Heart left ventricle (tissue), 16 donors: ENCODE measurements at regions of chr1 and their contacts with region 1.

Region 1: DNA sequence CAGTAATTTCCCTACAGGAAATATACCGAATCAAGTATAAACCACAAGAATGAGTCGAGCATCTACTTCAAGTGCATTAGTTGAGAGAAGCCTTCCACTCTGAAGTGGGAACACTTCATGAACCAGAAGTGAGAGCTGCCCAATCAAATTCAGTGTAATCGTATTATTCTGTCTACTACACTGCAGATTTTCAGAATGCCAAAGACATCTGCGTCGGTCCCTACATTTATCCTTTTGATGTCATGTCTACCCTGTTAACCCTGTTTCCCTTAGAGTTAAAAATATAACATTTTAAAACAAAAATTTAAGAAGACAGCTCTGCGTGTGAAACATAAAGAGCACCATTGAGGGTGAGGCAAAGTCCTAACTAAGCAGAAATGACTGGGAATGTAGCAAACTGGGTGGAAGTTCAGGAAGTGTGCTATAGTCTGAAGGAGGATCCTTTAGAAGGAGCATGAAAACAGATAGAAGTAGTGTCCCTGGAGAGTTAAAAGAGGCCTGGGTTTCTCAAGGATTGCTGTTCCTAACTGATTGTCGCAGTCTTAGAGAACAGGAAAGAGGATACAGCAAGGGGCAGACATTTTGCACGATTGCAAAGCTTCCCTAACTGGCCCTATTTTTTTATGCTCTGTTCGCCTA is 291.2 kb downstream of the PTPRC start:
- DNase-seq: no peak
- ATAC-seq: peak; percentile 58 to 84 (median 70)
- H3K4me3 ChIP-seq: peak overlapping the region in 9 of 12 donors; percentile 23 to 46 (median 36)
- H3K27ac ChIP-seq: peak overlapping the region in 11 of 12 donors; percentile 2 to 91 (median 48)
- H3K4me1 ChIP-seq: peaks cover 0 to 89% (median 34%) of the 10 kb centered on the region in 12 donors
- H3K27me3 ChIP-seq: no peaks in the 10 kb centered on the region
- CTCF ChIP-seq: no peak
- POLR2A ChIP-seq: no peak

Region 2: DNA sequence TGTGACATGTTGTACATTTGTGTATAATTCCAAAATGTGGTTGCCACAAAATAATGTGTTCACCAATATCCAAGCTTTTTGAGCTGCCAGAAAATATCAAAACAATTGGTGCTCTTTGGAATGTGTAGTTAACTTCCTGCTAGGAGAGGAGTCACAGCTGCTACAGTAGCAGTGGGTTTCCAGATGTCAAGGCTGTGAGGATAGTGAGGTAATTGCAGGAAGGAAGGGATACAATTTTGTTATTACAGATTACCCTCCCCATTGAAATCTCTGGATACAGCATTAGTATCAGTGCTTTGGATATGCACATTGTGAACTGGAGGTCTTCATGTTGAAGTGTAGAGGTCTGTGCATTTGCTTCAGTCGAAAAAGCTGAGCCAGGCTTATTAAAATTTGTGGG is 38.0 kb before region 1 on chr1:
- intact Hi-C with region 1: loop called in 1 of 10 experiments (anchors 5 kb)
- DNase-seq: peak in 2 of 5 donors; percentile 17 to 20
- ATAC-seq: peak; percentile 37 to 81 (median 70)
- H3K4me3 ChIP-seq: no peak overlapping the region
- H3K27ac ChIP-seq: peak overlapping the region in 7 of 12 donors; percentile 4 to 51 (median 25)
- H3K4me1 ChIP-seq: peaks cover 0 to 33% (median 13%) of the 10 kb centered on the region in 12 donors
- H3K27me3 ChIP-seq: no peaks in the 10 kb centered on the region
- CTCF ChIP-seq: no peak
- POLR2A ChIP-seq: no peak

Region 3: GRCh38 chr1:199173356-199173755 is 243.3 kb after region 1 on chr1:
- intact Hi-C with region 1: no loop called
- DNase-seq: no peak
- ATAC-seq: no peak
- H3K4me3 ChIP-seq: no peak overlapping the region
- H3K27ac ChIP-seq: no peak overlapping the region
- H3K4me1 ChIP-seq: peaks cover 0 to 9% (median 0%) of the 10 kb centered on the region in 12 donors
- H3K27me3 ChIP-seq: no peaks in the 10 kb centered on the region
- CTCF ChIP-seq: no peak
- POLR2A ChIP-seq: no peak